SK-N-SH (cell line): ENCODE measurements at regions of chr6 and their contacts with region 1.

Region 1: GRCh38 chr6:110528101-110528929 is 51.9 kb upstream of the SLC22A16 start:
- DNase-seq: peak; percentile 59
- H3K4me3 ChIP-seq: peak overlapping the region in 1 of 2 experiments; percentile 42; a peak in 1 of 4 replicates
- H3K27ac ChIP-seq: peak overlapping the region; percentile 47 to 91; a peak in 3 of 4 replicates
- H3K4me1 ChIP-seq: peaks cover 0 to 18% of the 10 kb centered on the region in 2 experiments; a peak in 2 of 4 replicates
- H3K27me3 ChIP-seq: no peaks in the 10 kb centered on the region
- CTCF ChIP-seq: peak; percentile 93
- EP300 ChIP-seq: peak; percentile 8 to 90; a peak in 3 of 4 replicates
- RAD21 ChIP-seq: peak; percentile 93

Region 2: DNA sequence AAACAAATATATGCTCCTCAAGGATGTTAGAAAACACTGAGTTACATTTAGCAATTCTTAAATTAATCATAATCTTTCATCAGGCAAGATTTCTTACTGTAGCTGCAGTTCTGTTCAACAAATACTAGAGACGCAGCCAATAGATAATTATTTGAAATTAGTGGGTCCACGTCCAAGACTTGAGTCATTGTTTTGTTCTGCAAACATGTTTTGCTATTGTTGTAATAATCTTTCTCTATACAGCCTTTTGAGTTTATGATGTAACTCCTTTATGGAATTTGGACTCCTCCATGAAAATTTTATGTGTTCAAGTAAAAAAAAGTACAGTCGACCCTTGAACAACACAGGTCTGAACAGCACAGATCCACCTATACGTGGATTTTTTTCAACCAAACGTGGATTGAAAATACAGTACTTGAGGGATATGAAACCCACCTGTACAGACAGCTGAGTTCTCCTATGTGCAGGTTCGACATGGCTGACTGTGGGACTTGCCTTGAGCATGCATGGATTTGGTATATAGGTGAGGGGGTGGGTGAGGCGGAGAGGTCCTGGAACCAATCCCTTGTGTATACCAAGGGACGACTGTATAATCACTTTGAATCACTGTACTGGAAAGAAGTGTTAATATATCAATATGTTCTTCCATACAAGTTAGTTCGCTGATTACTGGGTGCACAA is 10.6 kb before region 1 on chr6:
- CTCF ChIA-PET with region 1: interaction called, 19 read pairs
- POLR2A ChIA-PET with region 1: no interaction called
- DNase-seq: no peak
- H3K4me3 ChIP-seq: no peak overlapping the region
- H3K27ac ChIP-seq: no peak overlapping the region
- H3K4me1 ChIP-seq: peaks cover 0 to 5% of the 10 kb centered on the region in 2 experiments; a peak in 1 of 4 replicates
- H3K27me3 ChIP-seq: no peaks in the 10 kb centered on the region
- CTCF ChIP-seq: no peak
- EP300 ChIP-seq: no peak
- RAD21 ChIP-seq: no peak

Region 3: DNA sequence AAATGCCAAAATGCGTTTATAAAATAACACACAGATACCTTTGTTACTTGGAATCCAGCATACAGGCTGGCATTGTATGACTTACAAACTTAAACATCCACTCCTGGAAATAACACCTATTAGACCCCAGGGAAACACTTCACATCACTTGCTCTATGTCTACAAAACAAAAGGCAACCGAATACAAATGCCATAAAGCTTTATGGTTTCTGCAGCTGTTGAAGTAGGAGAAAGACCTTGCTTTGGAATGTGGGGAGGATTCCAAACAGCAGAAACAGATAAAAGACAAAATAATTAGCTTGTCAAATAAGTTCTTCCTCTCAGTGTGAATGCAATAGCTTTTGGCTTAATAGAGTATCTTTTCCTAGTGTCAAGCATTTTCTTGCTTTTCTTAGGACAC is 336.5 kb after region 1 on chr6:
- CTCF ChIA-PET with region 1: no interaction called
- POLR2A ChIA-PET with region 1: no interaction called
- DNase-seq: no peak
- H3K4me3 ChIP-seq: no peak overlapping the region
- H3K27ac ChIP-seq: no peak overlapping the region
- H3K4me1 ChIP-seq: no peaks in the 10 kb centered on the region
- H3K27me3 ChIP-seq: no peaks in the 10 kb centered on the region
- CTCF ChIP-seq: no peak
- EP300 ChIP-seq: no peak
- RAD21 ChIP-seq: no peak

Region 4: GRCh38 chr6:110944681-110945151 is 416.4 kb after region 1 on chr6:
- CTCF ChIA-PET with region 1: interaction called, 72 read pairs
- POLR2A ChIA-PET with region 1: no interaction called
- DNase-seq: no peak
- H3K4me3 ChIP-seq: no peak overlapping the region
- H3K27ac ChIP-seq: peak overlapping the region in 1 of 2 experiments; percentile 91; a peak in 2 of 4 replicates
- H3K4me1 ChIP-seq: 0 out of 4 replicates have a peak, but pooled peaks cover 0 to 3% of the 10 kb centered on the region in 2 experiments
- H3K27me3 ChIP-seq: no peaks in the 10 kb centered on the region
- CTCF ChIP-seq: no peak
- EP300 ChIP-seq: no peak
- RAD21 ChIP-seq: no peak